ENCODE measurements at regions of chr20 and their contacts with region 1.

Region 1: DNA sequence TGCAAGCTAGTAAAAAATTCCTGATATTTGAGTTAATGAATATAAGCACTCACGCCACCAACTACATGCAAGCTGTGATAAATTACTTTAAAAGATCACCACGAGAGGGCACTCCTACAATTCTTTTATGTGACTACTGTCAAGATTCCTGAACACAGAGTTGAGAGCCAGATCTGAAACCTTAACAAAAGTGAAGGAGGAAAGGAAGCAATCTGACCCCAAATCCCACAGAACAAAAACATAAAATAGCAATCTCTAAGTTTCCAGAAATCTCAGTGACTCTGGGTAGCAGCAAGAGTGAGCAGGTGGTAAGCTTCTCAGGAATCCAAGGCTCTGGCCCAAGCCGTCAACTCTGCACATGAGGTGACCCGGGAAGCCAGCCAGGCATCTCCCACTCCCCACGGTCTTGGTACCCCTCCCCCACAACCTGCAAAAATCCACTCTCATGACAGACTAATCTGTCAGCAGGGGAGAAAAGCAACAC is 55.1 kb downstream of the STAU1 start:
- DNase-seq: peak; percentile 84
- H3K4me3 ChIP-seq: no peak overlapping the region
- CTCF ChIP-seq: peak; percentile 42

Region 2: GRCh38 chr20:49078296-49078695 is 54.7 kb before region 1 on chr20:
- in situ Hi-C with region 1: loop called (anchors 10 kb)
- DNase-seq: no peak
- H3K4me3 ChIP-seq: no peak overlapping the region
- CTCF ChIP-seq: no peak

Region 3: GRCh38 chr20:49100972-49101371 is 32.1 kb before region 1 on chr20:
- in situ Hi-C with region 1: loop called (anchors 5 kb)
- DNase-seq: no peak
- H3K4me3 ChIP-seq: no peak overlapping the region
- CTCF ChIP-seq: no peak

Region 4: DNA sequence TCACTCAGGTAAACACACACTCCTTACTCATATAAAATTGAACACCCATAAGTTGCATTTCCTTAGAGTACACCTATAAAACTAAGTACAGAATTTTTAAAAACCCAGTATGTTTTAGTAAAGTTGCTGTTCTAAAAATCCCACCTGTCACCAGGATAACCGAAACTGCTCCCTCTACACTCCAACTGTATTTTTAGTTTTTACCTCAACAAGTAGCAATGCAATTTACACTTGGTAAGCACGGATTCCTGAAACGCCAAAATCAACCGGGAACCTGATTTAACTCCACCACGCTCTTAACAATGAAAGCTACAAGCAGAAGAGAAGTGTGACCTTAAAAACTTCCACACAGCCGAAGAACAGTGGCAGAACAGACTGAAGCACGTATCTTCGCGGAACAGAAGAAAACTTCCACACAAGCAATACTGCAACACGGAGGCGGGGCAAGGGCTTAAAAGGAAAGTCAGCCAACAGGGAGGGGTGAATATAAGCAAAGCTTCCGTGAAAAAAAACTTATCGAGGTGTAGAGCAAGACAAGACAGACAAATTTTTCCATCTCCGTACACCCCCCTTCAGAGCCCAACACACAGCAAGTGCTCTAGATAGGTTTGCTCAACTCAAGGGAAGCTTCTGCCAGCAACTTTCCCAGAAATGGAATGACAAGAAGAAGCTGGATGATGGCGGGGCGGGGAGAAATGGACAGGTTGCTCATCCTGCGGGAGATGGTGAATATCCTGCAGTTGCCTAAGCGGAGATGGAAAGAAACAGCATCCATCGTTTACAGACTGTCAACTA is 53.7 kb after region 1 on chr20:
- in situ Hi-C with region 1: loop called (anchors 10 kb)
- DNase-seq: peak; percentile 18
- H3K4me3 ChIP-seq: peak overlapping the region; percentile 80
- CTCF ChIP-seq: no peak

Region 5: GRCh38 chr20:49219924-49220831 is 87.1 kb after region 1 on chr20:
- in situ Hi-C with region 1: loop called (anchors 5 kb)
- DNase-seq: no peak
- H3K4me3 ChIP-seq: peak overlapping the region; percentile 84
- CTCF ChIP-seq: no peak

Region 6: GRCh38 chr20:49230561-49231193 is 97.6 kb after region 1 on chr20:
- in situ Hi-C with region 1: no loop called
- DNase-seq: no peak
- H3K4me3 ChIP-seq: no peak overlapping the region
- CTCF ChIP-seq: no peak